Dendritic cell treated with granulocyte-macrophage colony-stimulating factor and Interleukin-4, amounts not matched to agents 40 ng/mL and 50 ng/mL, for 4 days (primary cell): ENCODE measurements at regions of chr11 and their contacts with region 1.

Region 1: DNA sequence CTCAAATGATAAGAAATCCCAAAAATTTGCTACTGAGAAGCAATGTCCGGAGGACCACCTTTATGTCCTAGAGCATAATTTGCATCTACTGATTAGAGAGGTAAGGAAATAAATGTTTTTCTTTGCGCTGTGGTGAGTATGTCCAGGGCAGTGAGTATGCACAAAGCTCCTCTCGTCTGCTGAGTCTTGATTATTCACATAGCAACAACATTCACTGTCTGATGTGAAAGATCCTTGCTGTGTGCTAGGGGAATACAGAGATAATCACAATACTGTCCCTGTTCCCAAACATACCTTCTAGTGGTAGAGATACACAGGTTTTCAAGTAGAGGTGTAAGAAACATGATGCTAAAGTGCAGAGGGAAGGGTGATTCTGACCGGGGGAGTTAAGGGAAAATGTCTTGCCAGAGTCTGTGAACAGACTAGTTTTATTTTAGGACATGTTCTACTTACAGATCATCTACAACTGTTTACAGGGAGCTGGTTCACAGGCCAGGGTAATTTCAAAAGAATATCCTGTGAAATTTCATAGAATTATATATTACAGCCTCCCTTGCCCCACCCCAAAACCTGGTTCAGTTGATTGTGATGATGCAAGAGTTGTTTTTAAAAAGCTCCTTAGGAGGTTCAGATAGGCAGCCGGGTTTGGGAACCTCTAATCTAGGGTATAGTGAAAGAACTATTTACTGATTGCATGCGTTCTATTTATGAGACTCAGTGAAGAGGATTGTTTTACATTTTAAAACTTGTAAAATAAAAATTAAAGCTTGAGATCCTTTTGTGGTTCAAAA is 12.6 kb downstream of the MED17 start:
- H3K4me3 Mint-ChIP-seq: no peak overlapping the region
- H3K27ac Mint-ChIP-seq: no peak overlapping the region
- H3K4me1 Mint-ChIP-seq: no peaks in the 10 kb centered on the region
- H3K27me3 Mint-ChIP-seq: no peaks in the 10 kb centered on the region

Region 2: DNA sequence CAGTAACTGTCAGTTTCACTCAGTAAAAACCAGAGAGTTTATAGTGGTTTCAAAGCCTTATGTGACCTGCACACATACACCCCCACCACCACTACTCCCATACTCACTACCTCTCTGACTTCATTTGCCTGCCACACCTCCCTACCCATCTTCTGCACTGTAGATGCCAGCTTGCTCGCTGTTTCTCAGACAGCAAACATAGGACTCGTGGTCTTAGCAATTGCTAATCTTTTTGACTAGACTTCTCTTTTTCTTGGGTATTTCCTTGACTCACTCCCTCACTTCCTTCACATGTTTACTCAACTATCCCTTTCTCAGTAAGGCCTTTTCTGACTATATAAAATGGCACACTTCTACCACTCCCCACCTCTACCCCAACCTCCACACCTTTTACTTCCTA is 107.4 kb before region 1 on chr11:
- intact Hi-C with region 1: loop called (anchors 5 kb)
- H3K4me3 Mint-ChIP-seq: no peak overlapping the region
- H3K27ac Mint-ChIP-seq: peak overlapping the region; percentile 64
- H3K4me1 Mint-ChIP-seq: peaks cover 17% of the 10 kb centered on the region
- H3K27me3 Mint-ChIP-seq: no peaks in the 10 kb centered on the region

Region 3: GRCh38 chr11:94089341-94089740 is 292.7 kb after region 1 on chr11:
- intact Hi-C with region 1: no loop called
- H3K4me3 Mint-ChIP-seq: no peak overlapping the region
- H3K27ac Mint-ChIP-seq: no peak overlapping the region
- H3K4me1 Mint-ChIP-seq: no peaks in the 10 kb centered on the region
- H3K27me3 Mint-ChIP-seq: peaks cover 4% of the 10 kb centered on the region